ENCODE measurements at regions of chr5 and their contacts with region 1.

Region 1: GRCh38 chr5:59380350-59380951 is 513.1 kb downstream of the PDE4D start:
- DNase-seq: no peak
- ATAC-seq: peak; percentile 68

Region 2: GRCh38 chr5:59188419-59189225 is 191.8 kb before region 1 on chr5:
- intact Hi-C with region 1: loop called (anchors 5 kb)
- DNase-seq: peak; percentile 81
- ATAC-seq: peak; percentile 82

Measured in left ventricle myocardium superior (tissue), 1 donor.